CD4-positive, alpha-beta memory T cell (primary cell): ENCODE measurements at regions of chr4 and their contacts with region 1.

Region 1: GRCh38 chr4:151408630-151409469 is at the start of gene FHIP1A:
- DNase-seq: peak; percentile 84 to 91 (median 87)
- H3K4me3 ChIP-seq: peak within 1 kb of the TSS; percentile 62 to 90
- H3K4me3 Mint-ChIP-seq: peak within 1 kb of the TSS; percentile 90 to 99 (median 94)
- H3K27ac ChIP-seq: peak within 1 kb of the TSS; percentile 41
- H3K27ac Mint-ChIP-seq: peak within 1 kb of the TSS; percentile 85 to 95 (median 91)
- H3K4me1 ChIP-seq: peaks cover 24% of the 10 kb centered on the region
- H3K4me1 Mint-ChIP-seq: peaks cover 16 to 30% (median 22%) of the 10 kb centered on the region in 4 donors
- H3K27me3 ChIP-seq: no peaks in the 10 kb centered on the region
- H3K27me3 Mint-ChIP-seq: no peaks in the 10 kb centered on the region
- total RNA-seq, gene FHIP1A: 2.6 to 3.2 TPM

Region 2: GRCh38 chr4:151015459-151016347 is 393.1 kb before region 1 on chr4:
- CTCF ChIA-PET with region 1: no interaction called
- POLR2A ChIA-PET with region 1: no interaction called
- intact Hi-C with region 1: loop called (anchors 2 kb)
- DNase-seq: peak; percentile 81 to 90 (median 88)
- H3K4me3 ChIP-seq: peak overlapping the region; percentile 92 to 98
- H3K4me3 Mint-ChIP-seq: peak overlapping the region; percentile 100
- H3K27ac ChIP-seq: peak overlapping the region; percentile 88
- H3K27ac Mint-ChIP-seq: peak overlapping the region; percentile 93 to 99 (median 99)
- H3K4me1 ChIP-seq: peaks cover 40% of the 10 kb centered on the region
- H3K4me1 Mint-ChIP-seq: peaks cover 19 to 44% (median 26%) of the 10 kb centered on the region in 4 donors
- H3K27me3 ChIP-seq: no peaks in the 10 kb centered on the region
- H3K27me3 Mint-ChIP-seq: no peaks in the 10 kb centered on the region

Region 3: GRCh38 chr4:151099229-151099975 is 309.4 kb before region 1 on chr4 and contains the start of gene RPS3A:
- CTCF ChIA-PET with region 1: no interaction called
- POLR2A ChIA-PET with region 1: no interaction called
- intact Hi-C with region 1: loop called (anchors 2 kb)
- DNase-seq: peak; percentile 99 to 100 (median 99)
- H3K4me3 ChIP-seq: peak within 1 kb of the TSS; percentile 79 to 82
- H3K4me3 Mint-ChIP-seq: peak within 1 kb of the TSS; percentile 91 to 99 (median 96)
- H3K27ac ChIP-seq: peak within 1 kb of the TSS; percentile 86
- H3K27ac Mint-ChIP-seq: peak within 1 kb of the TSS; percentile 95 to 99 (median 98)
- H3K4me1 ChIP-seq: peaks cover 32% of the 10 kb centered on the region
- H3K4me1 Mint-ChIP-seq: peaks cover 19 to 41% (median 27%) of the 10 kb centered on the region in 4 donors
- H3K27me3 ChIP-seq: no peaks in the 10 kb centered on the region
- H3K27me3 Mint-ChIP-seq: peaks cover 0 to 3% of the 10 kb centered on the region in 2 donors
- total RNA-seq, gene RPS3A: 4,011 to 4,334 TPM

Region 4: GRCh38 chr4:151395873-151396272 is 13.0 kb before region 1 on chr4:
- CTCF ChIA-PET with region 1: no interaction called
- POLR2A ChIA-PET with region 1: no interaction called
- intact Hi-C with region 1: no loop called
- DNase-seq: no peak
- H3K4me3 ChIP-seq: no peak overlapping the region
- H3K4me3 Mint-ChIP-seq: no peak overlapping the region
- H3K27ac ChIP-seq: no peak overlapping the region
- H3K27ac Mint-ChIP-seq: no peak overlapping the region
- H3K4me1 ChIP-seq: no peaks in the 10 kb centered on the region
- H3K4me1 Mint-ChIP-seq: no peaks in the 10 kb centered on the region
- H3K27me3 ChIP-seq: no peaks in the 10 kb centered on the region
- H3K27me3 Mint-ChIP-seq: peaks cover 4 to 7% of the 10 kb centered on the region in 2 donors

Region 5: DNA sequence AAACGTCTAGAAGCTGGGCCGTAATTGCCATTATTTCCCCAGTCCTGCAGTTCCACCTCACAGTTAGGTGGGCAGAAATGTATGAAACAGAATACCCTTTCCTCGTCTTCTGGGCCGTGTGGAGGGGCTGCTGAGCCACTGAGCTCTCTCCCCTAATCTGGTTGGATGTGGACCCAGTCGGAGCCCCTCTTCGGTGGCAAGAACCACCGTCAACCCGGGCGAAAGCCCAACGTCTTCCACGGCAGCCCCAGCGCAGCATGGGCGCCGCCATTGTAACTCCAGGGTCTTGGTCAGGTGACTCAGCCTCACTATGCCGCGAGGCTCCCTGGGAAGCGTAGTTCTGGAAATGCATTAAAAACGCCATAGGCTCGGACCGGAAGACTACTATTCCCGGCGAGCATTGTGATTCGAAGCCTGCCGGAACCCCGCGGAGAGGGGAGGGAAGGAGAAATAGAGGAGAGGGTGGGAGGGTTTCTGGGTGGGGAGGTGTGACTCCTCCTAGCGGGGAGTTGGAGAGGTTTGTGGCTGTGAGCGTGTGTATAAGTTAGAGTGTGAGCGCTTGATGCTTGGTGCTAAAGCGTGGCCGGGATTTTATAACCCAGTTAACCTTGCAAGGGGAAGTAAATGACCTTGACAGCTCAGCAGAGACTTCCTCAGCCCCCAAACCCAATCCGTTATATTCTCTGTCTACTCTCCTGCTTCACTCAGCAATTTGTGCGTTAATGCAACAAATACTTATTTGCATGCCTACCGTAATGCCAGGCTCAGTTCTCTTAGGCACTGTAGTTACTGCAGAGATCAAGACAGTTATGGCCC is 352.1 kb after region 1 on chr4 and contains the start of gene GATB:
- CTCF ChIA-PET with region 1: no interaction called
- POLR2A ChIA-PET with region 1: no interaction called
- intact Hi-C with region 1: loop called (anchors 2 kb)
- DNase-seq: peak; percentile 91 to 97 (median 93)
- H3K4me3 ChIP-seq: peak within 1 kb of the TSS; percentile 77 to 84
- H3K4me3 Mint-ChIP-seq: peak within 1 kb of the TSS; percentile 96 to 100 (median 98)
- H3K27ac ChIP-seq: peak within 1 kb of the TSS; percentile 60
- H3K27ac Mint-ChIP-seq: peak within 1 kb of the TSS; percentile 87 to 98 (median 97)
- H3K4me1 ChIP-seq: peaks cover 13% of the 10 kb centered on the region
- H3K4me1 Mint-ChIP-seq: peaks cover 13 to 19% (median 17%) of the 10 kb centered on the region in 4 donors
- H3K27me3 ChIP-seq: no peaks in the 10 kb centered on the region
- H3K27me3 Mint-ChIP-seq: peaks cover under 1 to 1% of the 10 kb centered on the region in 2 donors
- total RNA-seq, gene GATB: 10.8 to 12.5 TPM

Region 6: GRCh38 chr4:152779513-152780266 is 1370.8 kb after region 1 on chr4 and contains the starts of genes ARFIP1 and TIGD4:
- CTCF ChIA-PET with region 1: no interaction called
- POLR2A ChIA-PET with region 1: no interaction called
- intact Hi-C with region 1: loop called (anchors 5 kb)
- DNase-seq: peak; percentile 93 to 95 (median 94)
- H3K4me3 ChIP-seq: peak within 1 kb of the TSS; percentile 94 to 96
- H3K4me3 Mint-ChIP-seq: peak within 1 kb of the TSS; percentile 92 to 100 (median 99)
- H3K27ac ChIP-seq: peak within 1 kb of the TSS; percentile 78
- H3K27ac Mint-ChIP-seq: peak within 1 kb of the TSS; percentile 93 to 99 (median 98)
- H3K4me1 ChIP-seq: peaks cover 27% of the 10 kb centered on the region
- H3K4me1 Mint-ChIP-seq: peaks cover 28 to 49% (median 40%) of the 10 kb centered on the region in 4 donors
- H3K27me3 ChIP-seq: no peaks in the 10 kb centered on the region
- H3K27me3 Mint-ChIP-seq: peaks cover 0 to 2% of the 10 kb centered on the region in 2 donors
- total RNA-seq, gene ARFIP1: 12.5 to 16.5 TPM
- total RNA-seq, gene TIGD4: 0.12 to 0.17 TPM

Region 7: GRCh38 chr4:153115322-153116290 is 1706.8 kb after region 1 on chr4:
- CTCF ChIA-PET with region 1: no interaction called
- POLR2A ChIA-PET with region 1: no interaction called
- intact Hi-C with region 1: loop called (anchors 10 kb)
- DNase-seq: peak; percentile 85 to 92 (median 89)
- H3K4me3 ChIP-seq: peak overlapping the region in 1 of 2 donors; percentile 37
- H3K4me3 Mint-ChIP-seq: peak overlapping the region in 1 of 8 donors; percentile 74
- H3K27ac ChIP-seq: peak overlapping the region; percentile 68
- H3K27ac Mint-ChIP-seq: no peak overlapping the region
- H3K4me1 ChIP-seq: peaks cover 62% of the 10 kb centered on the region
- H3K4me1 Mint-ChIP-seq: peaks cover 0 to 18% (median 9%) of the 10 kb centered on the region in 4 donors
- H3K27me3 ChIP-seq: no peaks in the 10 kb centered on the region
- H3K27me3 Mint-ChIP-seq: no peaks in the 10 kb centered on the region